ENCODE measurements at regions of chr18 and their contacts with region 1.

Region 1: GRCh38 chr18:49447810-49448745 is 12.4 kb downstream of the DYM start:
- DNase-seq: peak; percentile 21
- H3K4me3 ChIP-seq: no peak overlapping the region
- H3K27ac ChIP-seq: no peak overlapping the region
- H3K4me1 ChIP-seq: no peaks in the 10 kb centered on the region
- H3K27me3 ChIP-seq: no peaks in the 10 kb centered on the region
- CTCF ChIP-seq: peak; percentile 35 to 62 (median 58)
- EP300 ChIP-seq: no peak
- POLR2A ChIP-seq: no peak

Region 2: GRCh38 chr18:49228187-49228586 is 219.9 kb before region 1 on chr18:
- in situ Hi-C with region 1: no loop called
- intact Hi-C with region 1: no loop called
- DNase-seq: no peak
- H3K4me3 ChIP-seq: no peak overlapping the region
- H3K27ac ChIP-seq: peak overlapping the region; percentile 45 to 56 (median 52)
- H3K4me1 ChIP-seq: peaks cover 0 to 36% (median 22%) of the 10 kb centered on the region in 4 donors
- H3K27me3 ChIP-seq: no peaks in the 10 kb centered on the region
- CTCF ChIP-seq: no peak
- EP300 ChIP-seq: no peak
- POLR2A ChIP-seq: no peak

Region 3: DNA sequence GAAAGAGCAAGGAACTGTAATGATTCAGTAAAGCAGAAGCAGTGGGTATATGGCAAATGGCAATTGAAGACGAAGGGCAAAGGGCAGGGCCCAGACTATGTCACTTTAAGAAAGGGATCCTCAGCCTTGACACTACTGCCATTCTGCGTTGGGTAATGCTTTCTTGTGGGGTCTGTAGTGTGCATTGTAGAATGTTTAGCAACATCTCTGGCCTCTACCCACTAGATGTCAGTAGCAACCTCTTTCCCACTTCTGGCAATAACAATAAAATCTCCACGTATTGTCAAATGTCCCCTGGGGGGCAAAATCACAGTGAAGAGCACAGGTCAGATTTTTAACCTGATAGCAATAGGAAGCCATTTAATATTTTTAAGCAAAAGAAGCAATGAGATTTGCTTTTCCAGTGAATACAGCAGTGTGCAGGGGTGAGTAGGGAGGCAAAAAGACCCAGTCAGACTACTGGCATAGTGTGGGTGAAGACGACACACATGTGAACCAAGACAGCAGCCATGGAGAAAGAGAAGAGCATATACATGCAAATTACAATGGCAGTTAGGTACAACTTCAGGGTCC is 197.2 kb before region 1 on chr18:
- in situ Hi-C with region 1: loop called in 1 of 4 experiments (anchors 25 kb)
- intact Hi-C with region 1: no loop called
- DNase-seq: no peak
- H3K4me3 ChIP-seq: no peak overlapping the region
- H3K27ac ChIP-seq: no peak overlapping the region
- H3K4me1 ChIP-seq: peaks cover 0 to 16% (median 11%) of the 10 kb centered on the region in 4 donors
- H3K27me3 ChIP-seq: no peaks in the 10 kb centered on the region
- CTCF ChIP-seq: peak; percentile 28 to 40 (median 29)
- EP300 ChIP-seq: no peak
- POLR2A ChIP-seq: no peak